Heart right ventricle (tissue), 16 donors: ENCODE measurements at regions of chr2 and their contacts with region 1.

Region 1: GRCh38 chr2:217872319-217872718 is 130.5 kb downstream of the TNS1 start:
- DNase-seq: no peak
- ATAC-seq: no peak
- H3K4me3 ChIP-seq: no peak overlapping the region
- H3K27ac ChIP-seq: no peak overlapping the region
- H3K4me1 ChIP-seq: peaks cover 0 to 75% (median 54%) of the 10 kb centered on the region in 9 donors
- H3K27me3 ChIP-seq: no peaks in the 10 kb centered on the region
- CTCF ChIP-seq: peak in 2 of 9 donors; percentile 5 to 14

Region 2: DNA sequence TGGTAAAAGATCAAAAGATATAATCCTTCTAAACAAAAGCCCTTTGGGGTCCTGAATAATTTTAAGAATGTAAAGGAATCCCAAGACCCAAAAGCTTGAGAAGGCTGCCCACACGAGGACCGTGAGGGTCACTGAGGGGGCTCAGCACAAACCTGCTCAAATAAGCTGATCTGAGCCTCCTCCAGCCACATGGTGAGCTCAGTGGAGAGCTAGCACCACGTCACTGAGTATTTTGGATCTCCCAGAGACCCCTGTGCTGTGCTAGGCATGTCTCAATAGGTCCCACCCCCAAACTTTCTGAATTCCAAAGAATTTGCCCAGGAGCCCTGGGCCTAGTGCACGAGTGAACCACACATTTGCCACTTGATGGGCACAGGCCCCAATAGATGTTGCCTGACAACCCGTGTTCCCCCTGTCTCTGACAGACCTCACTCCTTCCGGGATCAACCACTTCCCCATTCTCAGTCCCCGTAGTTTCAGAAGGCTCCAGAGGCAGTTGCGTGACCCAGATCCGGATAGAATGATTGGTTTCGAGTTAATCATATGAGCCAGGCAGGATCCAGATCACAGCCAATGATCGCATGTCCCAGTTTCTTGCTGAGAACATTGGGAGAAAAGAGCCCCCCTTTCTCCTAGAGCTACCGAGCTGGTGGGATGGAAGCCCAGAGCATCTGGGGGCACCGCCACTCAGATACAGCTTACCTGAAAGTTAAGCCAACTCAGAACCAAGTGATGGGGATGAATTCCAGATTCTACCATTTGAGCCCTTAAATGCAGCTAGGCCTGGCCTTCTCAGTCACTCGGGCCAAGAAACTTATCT is 73.4 kb before region 1 on chr2:
- intact Hi-C with region 1: loop called in 3 of 10 experiments (anchors 5 to 10 kb)
- DNase-seq: peak in 1 of 2 donors; percentile 34
- ATAC-seq: peak in 3 of 8 donors; percentile 7 to 16 (median 10)
- H3K4me3 ChIP-seq: no peak overlapping the region
- H3K27ac ChIP-seq: peak overlapping the region in 7 of 10 donors; percentile 13 to 76 (median 34)
- H3K4me1 ChIP-seq: peaks cover 8 to 92% (median 57%) of the 10 kb centered on the region in 9 donors
- H3K27me3 ChIP-seq: no peaks in the 10 kb centered on the region
- CTCF ChIP-seq: no peak

Region 3: GRCh38 chr2:217822296-217823252 is 49.7 kb before region 1 on chr2:
- intact Hi-C with region 1: loop called in 1 of 10 experiments (anchors 10 kb)
- DNase-seq: no peak
- ATAC-seq: peak in 4 of 8 donors; percentile 5 to 28 (median 14)
- H3K4me3 ChIP-seq: no peak overlapping the region
- H3K27ac ChIP-seq: peak overlapping the region in 9 of 10 donors; percentile 31 to 96 (median 64)
- H3K4me1 ChIP-seq: peaks cover 44 to 100% (median 99%) of the 10 kb centered on the region in 9 donors
- H3K27me3 ChIP-seq: no peaks in the 10 kb centered on the region
- CTCF ChIP-seq: peak in 1 of 9 donors; percentile 12